Activated CD4-positive, alpha-beta T cell treated with anti-CD3 and anti-CD28 coated beads for 36 hours (primary cell): ENCODE measurements at regions of chr5 and their contacts with region 1.

Region 1: GRCh38 chr5:142221091-142221860 is 103.5 kb downstream of the SPRY4 start:
- DNase-seq: no peak
- ATAC-seq: no peak
- H3K4me3 Mint-ChIP-seq: no peak overlapping the region
- H3K27ac Mint-ChIP-seq: no peak overlapping the region
- H3K4me1 Mint-ChIP-seq: peaks cover 30% of the 10 kb centered on the region
- H3K27me3 Mint-ChIP-seq: no peaks in the 10 kb centered on the region

Region 2: GRCh38 chr5:142006363-142007236 is 214.7 kb before region 1 on chr5:
- CTCF ChIA-PET with region 1: no interaction called
- POLR2A ChIA-PET with region 1: no interaction called
- intact Hi-C with region 1: loop called in 1 of 2 experiments (anchors 2 kb)
- DNase-seq: peak; percentile 85
- ATAC-seq: peak; percentile 90
- H3K4me3 Mint-ChIP-seq: peak overlapping the region; percentile 31
- H3K27ac Mint-ChIP-seq: peak overlapping the region; percentile 89
- H3K4me1 Mint-ChIP-seq: peaks cover 70% of the 10 kb centered on the region
- H3K27me3 Mint-ChIP-seq: no peaks in the 10 kb centered on the region

Region 3: DNA sequence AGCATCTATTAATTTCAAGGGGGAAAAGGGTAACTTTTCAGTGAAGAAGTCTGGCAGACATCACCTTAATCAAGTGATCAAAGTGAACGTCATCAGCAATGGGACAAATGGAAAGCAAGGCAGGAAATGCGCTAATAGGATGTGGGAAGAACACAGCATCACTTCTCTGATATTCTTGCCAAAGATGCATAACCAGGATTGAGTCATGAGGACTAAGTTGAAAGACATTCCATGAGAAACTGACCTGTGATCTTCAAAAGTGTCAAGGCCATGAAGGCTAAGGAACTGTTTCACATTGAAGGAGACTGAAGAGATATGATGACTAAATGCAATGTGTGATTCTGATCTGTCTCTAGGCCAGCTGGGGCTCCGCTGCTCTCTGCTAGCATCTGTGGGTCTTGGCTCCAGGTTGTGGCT is 19.8 kb before region 1 on chr5:
- CTCF ChIA-PET with region 1: no interaction called
- POLR2A ChIA-PET with region 1: no interaction called
- intact Hi-C with region 1: no loop called
- DNase-seq: no peak
- ATAC-seq: no peak
- H3K4me3 Mint-ChIP-seq: no peak overlapping the region
- H3K27ac Mint-ChIP-seq: no peak overlapping the region
- H3K4me1 Mint-ChIP-seq: no peaks in the 10 kb centered on the region
- H3K27me3 Mint-ChIP-seq: peaks cover 3% of the 10 kb centered on the region

Region 4: GRCh38 chr5:142235055-142235797 is 13.9 kb after region 1 on chr5:
- CTCF ChIA-PET with region 1: interaction called, 3 read pairs
- POLR2A ChIA-PET with region 1: no interaction called
- intact Hi-C with region 1: loop called in 1 of 2 experiments (anchors 1 kb)
- DNase-seq: peak; percentile 52
- ATAC-seq: peak; percentile 95
- H3K4me3 Mint-ChIP-seq: no peak overlapping the region
- H3K27ac Mint-ChIP-seq: no peak overlapping the region
- H3K4me1 Mint-ChIP-seq: peaks cover 9% of the 10 kb centered on the region
- H3K27me3 Mint-ChIP-seq: peaks cover 4% of the 10 kb centered on the region

Region 5: DNA sequence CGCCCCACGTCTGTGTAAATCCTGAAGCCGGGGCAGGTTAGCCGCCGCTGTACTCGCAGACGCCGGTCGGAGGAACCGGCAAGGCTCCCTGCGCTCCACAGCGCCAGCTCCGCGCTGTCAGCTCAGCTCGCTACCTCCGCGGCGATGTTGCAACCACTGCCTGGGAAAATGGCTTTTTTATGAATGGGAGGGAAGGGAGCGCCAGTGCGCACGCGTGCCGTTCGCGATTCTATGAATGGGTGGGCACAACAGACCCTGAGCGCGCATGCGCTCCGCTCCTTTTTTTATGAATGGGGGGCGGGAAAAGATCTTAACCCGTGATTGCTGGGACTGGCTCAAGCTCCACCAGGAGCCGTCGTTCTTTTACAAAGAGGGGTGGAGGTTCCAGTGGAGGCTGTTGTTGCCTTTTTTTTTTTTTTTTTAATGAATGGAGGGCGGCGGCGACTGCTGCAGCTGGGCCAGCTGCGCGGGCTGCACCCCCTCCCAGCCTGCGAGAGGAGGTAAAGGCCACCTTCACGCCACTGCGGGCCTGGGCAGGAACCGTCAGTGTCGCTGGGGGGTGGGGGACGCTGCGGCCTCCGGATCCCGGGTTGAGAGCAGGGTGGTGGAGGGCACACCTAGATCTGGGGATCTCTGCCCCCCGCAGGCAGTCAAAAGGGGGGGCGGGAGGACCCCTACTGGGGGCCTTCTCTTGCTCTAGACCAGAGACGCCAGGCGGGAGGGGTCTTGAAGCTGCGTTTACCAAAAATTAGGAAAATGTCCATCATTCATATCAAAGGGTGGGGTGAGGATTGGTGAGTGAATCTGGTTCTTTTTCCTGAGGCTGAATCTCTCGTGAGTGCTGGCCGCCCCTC is 103.8 kb after region 1 on chr5 and contains the start of gene SPRY4:
- CTCF ChIA-PET with region 1: interaction called, 4 read pairs
- POLR2A ChIA-PET with region 1: no interaction called
- intact Hi-C with region 1: loop called in 1 of 2 experiments (anchors 1 kb)
- DNase-seq: peak; percentile 95
- ATAC-seq: peak; percentile 89
- H3K4me3 Mint-ChIP-seq: peak within 1 kb of the TSS; percentile 77
- H3K27ac Mint-ChIP-seq: peak within 1 kb of the TSS; percentile 79
- H3K4me1 Mint-ChIP-seq: peaks cover 37% of the 10 kb centered on the region
- H3K27me3 Mint-ChIP-seq: peaks cover 36% of the 10 kb centered on the region
- total RNA-seq, gene SPRY4: 0.93 to 0.98 TPM

Region 6: GRCh38 chr5:142356716-142357473 is 135.6 kb after region 1 on chr5:
- CTCF ChIA-PET with region 1: no interaction called
- POLR2A ChIA-PET with region 1: no interaction called
- intact Hi-C with region 1: loop called in 1 of 2 experiments (anchors 1 kb)
- DNase-seq: peak; percentile 94
- ATAC-seq: peak; percentile 85
- H3K4me3 Mint-ChIP-seq: peak overlapping the region; percentile 70
- H3K27ac Mint-ChIP-seq: peak overlapping the region; percentile 96
- H3K4me1 Mint-ChIP-seq: peaks cover 49% of the 10 kb centered on the region
- H3K27me3 Mint-ChIP-seq: no peaks in the 10 kb centered on the region

Region 7: GRCh38 chr5:142548739-142549275 is 327.5 kb after region 1 on chr5:
- CTCF ChIA-PET with region 1: interaction called, 4 read pairs
- POLR2A ChIA-PET with region 1: no interaction called
- intact Hi-C with region 1: loop called in 1 of 2 experiments (anchors 5 kb)
- DNase-seq: peak; percentile 51
- ATAC-seq: peak; percentile 92
- H3K4me3 Mint-ChIP-seq: no peak overlapping the region
- H3K27ac Mint-ChIP-seq: no peak overlapping the region
- H3K4me1 Mint-ChIP-seq: peaks cover 15% of the 10 kb centered on the region
- H3K27me3 Mint-ChIP-seq: peaks cover 9% of the 10 kb centered on the region